Activated CD8-positive, alpha-beta T cell treated with anti-CD3 and anti-CD28 coated beads, Interleukin-2, amount 10 ng/mL, durations not matched to agents 7 days and 5 days (primary cell): ENCODE measurements at regions of chr3 and their contacts with region 1.

Region 1: DNA sequence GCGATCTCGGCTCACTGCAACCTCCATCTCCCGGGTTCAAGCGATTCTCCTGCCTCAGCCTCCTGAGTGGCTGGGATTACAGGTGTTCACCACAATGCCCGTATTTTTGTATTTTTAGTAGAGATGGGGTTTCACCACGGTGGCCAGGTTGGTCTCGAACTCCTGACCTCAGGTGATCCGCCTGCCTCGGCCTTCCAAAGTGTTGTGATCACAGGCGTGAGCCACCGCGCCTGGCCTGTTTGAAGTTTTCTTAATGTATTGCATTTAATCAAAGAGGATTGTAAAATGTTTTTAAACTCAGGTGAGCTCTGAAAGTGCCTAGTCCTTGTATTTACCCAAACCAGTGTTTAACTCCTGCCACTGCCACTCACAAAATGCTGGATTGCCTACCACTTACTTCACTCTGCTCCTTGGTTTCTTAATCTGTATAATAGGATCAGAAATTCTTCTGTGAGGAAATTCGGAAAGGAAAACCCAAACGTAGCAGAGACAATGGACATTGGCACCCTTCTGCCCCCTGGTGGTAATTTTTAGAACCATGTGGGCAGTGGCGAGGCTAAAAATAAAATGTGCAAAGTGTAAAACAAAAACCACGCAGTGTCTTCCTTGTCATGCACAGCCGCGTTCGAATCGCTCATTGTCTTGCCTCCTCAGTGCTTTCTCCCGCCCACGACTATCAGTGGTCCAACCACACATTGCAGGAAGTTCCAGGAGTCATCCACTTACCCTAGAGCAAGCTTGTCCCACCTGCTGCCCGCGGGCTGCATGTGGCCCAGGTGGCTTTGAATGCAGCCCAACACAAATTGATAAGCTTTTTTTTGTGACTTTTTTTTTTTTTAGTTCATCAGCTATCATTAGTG is 27.3 kb downstream of the CEP19 start:
- DNase-seq: peak; percentile 80
- ATAC-seq: peak; percentile 88
- H3K4me3 Mint-ChIP-seq: peak overlapping the region; percentile 43
- H3K27ac Mint-ChIP-seq: peak overlapping the region; percentile 78
- H3K4me1 Mint-ChIP-seq: peaks cover 29% of the 10 kb centered on the region
- H3K27me3 Mint-ChIP-seq: no peaks in the 10 kb centered on the region

Region 2: GRCh38 chr3:196528639-196529233 is 156.0 kb before region 1 on chr3:
- CTCF ChIA-PET with region 1: interaction called, 18 read pairs
- POLR2A ChIA-PET with region 1: no interaction called
- DNase-seq: peak; percentile 84
- ATAC-seq: peak; percentile 100
- H3K4me3 Mint-ChIP-seq: peak overlapping the region; percentile 62
- H3K27ac Mint-ChIP-seq: peak overlapping the region; percentile 25
- H3K4me1 Mint-ChIP-seq: peaks cover 11% of the 10 kb centered on the region
- H3K27me3 Mint-ChIP-seq: peaks cover 13% of the 10 kb centered on the region

Region 3: GRCh38 chr3:196632046-196632751 is 52.6 kb before region 1 on chr3:
- CTCF ChIA-PET with region 1: interaction called, 15 read pairs
- POLR2A ChIA-PET with region 1: interaction called, 6 read pairs
- DNase-seq: peak; percentile 97
- ATAC-seq: peak; percentile 87
- H3K4me3 Mint-ChIP-seq: peak overlapping the region; percentile 94
- H3K27ac Mint-ChIP-seq: peak overlapping the region; percentile 99
- H3K4me1 Mint-ChIP-seq: peaks cover 79% of the 10 kb centered on the region
- H3K27me3 Mint-ChIP-seq: no peaks in the 10 kb centered on the region

Region 4: DNA sequence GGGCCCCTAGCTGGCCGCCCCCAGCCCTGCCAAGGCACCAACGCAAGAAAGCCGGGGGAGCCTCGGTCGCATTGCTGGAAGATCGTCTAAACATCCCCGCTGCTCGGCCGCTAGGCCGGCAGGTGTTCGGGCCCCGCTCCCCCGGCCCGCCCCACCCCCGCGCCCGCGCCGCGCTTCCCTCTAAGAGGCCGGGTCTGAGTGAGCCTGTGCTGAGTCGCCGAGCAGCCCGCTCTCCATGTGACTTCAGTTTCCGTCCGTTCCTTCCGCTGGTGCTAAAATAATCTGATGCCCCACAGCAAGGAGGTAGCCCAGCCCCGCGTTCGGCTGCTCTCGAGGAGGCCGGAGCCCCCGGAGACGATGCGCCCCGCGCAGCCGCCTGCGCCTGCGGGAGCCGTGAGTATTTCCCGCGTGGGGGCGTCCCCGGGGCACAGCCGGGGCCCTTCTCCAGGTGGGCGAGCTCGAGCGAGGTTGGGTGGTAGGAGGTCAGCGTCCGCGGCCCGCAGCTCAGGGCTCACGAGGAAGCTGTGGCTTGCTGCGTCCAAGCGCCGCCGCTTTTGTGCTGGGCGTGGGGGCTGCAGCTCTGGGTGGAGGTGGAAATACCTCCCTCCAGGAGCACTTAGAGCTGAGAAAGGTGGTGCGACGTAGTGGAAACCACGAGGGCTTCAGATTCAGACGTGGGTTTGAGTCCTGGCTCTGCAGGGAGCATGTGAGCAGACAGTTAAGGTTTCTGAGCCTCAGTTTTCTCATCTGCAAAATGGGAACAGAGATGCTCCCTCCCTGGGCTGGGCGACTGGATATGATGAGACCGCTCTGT is 45.1 kb before region 1 on chr3 and contains the start of gene NRROS:
- CTCF ChIA-PET with region 1: interaction called, 42 read pairs
- POLR2A ChIA-PET with region 1: no interaction called
- DNase-seq: peak; percentile 82
- ATAC-seq: peak; percentile 85
- H3K4me3 Mint-ChIP-seq: peak within 1 kb of the TSS; percentile 87
- H3K27ac Mint-ChIP-seq: peak within 1 kb of the TSS; percentile 90
- H3K4me1 Mint-ChIP-seq: peaks cover 82% of the 10 kb centered on the region
- H3K27me3 Mint-ChIP-seq: no peaks in the 10 kb centered on the region
- total RNA-seq, gene NRROS: 37.5 to 39.9 TPM

Region 5: DNA sequence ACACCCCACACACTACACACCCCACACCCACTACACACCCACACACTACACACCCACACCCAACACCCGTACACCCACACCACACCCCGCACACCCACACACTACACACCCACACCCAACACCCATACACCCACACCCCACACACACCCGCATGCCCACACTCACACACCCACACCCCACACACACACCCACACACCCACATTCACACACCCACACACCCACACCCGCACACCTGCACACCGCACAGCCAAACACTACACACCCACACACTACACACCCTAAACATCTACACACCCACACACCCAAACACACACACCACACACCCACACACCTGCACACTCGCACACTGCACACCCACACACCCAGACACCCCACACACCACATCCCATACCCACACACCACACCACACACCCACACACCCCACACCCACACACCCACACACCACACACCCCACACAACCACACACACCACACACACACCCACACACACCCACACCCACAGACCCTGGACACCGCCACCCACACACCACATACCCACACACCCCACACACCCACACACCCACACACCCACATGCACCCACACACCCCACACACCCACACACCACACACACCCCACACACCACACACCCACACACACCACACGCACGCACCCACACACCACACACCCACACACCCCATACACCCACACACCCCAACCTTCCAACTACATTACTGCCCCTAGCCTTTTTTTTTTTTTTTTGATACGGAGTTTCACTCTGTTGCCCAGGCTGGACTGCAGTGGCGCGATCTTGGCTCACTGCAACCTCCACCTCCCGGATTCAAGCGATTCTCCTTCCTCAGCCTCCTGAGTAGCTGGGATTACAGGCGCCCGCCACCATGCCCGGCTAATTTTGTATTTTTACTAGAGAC is 10.4 kb after region 1 on chr3:
- CTCF ChIA-PET with region 1: interaction called, 10 read pairs
- POLR2A ChIA-PET with region 1: no interaction called
- DNase-seq: no peak
- ATAC-seq: no peak
- H3K4me3 Mint-ChIP-seq: no peak overlapping the region
- H3K27ac Mint-ChIP-seq: peak overlapping the region; percentile 34
- H3K4me1 Mint-ChIP-seq: peaks cover 2% of the 10 kb centered on the region
- H3K27me3 Mint-ChIP-seq: peaks cover 2% of the 10 kb centered on the region

Region 6: DNA sequence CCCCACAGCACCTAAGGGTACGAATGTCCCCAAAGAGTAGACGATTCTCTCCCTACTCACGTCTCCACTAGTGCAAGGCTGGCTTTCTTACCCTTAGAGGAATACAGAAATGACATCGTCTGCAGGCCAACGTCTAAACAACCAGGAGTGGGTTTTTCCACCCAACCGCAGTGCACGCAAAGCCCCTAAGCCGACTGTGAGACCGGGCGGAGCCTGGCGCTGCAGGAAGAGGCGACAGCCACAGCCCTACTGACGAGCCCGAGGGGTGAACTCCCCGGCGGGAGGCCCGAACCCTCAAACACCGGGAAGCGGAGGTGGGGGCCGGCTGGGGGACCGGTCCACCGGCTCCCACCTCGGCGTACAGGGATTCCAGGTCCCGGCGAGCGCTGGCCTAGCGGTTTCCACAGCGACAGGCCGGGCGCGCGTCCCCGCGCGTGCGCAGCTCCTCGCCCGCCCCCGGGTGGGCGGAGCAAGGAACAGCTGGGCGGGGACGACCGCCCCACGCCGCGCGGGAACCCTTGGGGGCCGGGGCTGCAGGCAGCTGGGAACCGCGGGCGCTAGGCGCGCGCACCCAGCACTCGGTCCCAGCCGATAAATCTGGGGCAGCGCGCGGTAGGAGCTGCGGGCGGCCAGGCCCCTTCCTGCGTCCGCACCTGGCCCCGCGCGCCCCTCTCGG is 27.2 kb after region 1 on chr3 and contains the starts of genes CEP19 and PIGX:
- CTCF ChIA-PET with region 1: interaction called, 18 read pairs
- POLR2A ChIA-PET with region 1: no interaction called
- DNase-seq: peak; percentile 91
- ATAC-seq: peak; percentile 87
- H3K4me3 Mint-ChIP-seq: peak within 1 kb of the TSS; percentile 86
- H3K27ac Mint-ChIP-seq: peak within 1 kb of the TSS; percentile 91
- H3K4me1 Mint-ChIP-seq: peaks cover 37% of the 10 kb centered on the region
- H3K27me3 Mint-ChIP-seq: no peaks in the 10 kb centered on the region
- total RNA-seq, gene CEP19: 4.6 to 5.6 TPM
- total RNA-seq, gene PIGX: 41.5 to 42.1 TPM

Region 7: GRCh38 chr3:196942226-196942914 is 257.6 kb after region 1 on chr3 and contains the start of gene NCBP2:
- CTCF ChIA-PET with region 1: no interaction called
- POLR2A ChIA-PET with region 1: no interaction called
- DNase-seq: peak; percentile 100
- ATAC-seq: peak; percentile 94
- H3K4me3 Mint-ChIP-seq: peak within 1 kb of the TSS; percentile 97
- H3K27ac Mint-ChIP-seq: peak within 1 kb of the TSS; percentile 98
- H3K4me1 Mint-ChIP-seq: peaks cover 49% of the 10 kb centered on the region
- H3K27me3 Mint-ChIP-seq: peaks cover 2% of the 10 kb centered on the region
- total RNA-seq, gene NCBP2: 49.1 to 52.4 TPM